ENCODE measurements at regions of chr2 and their contacts with region 1.

Region 1: DNA sequence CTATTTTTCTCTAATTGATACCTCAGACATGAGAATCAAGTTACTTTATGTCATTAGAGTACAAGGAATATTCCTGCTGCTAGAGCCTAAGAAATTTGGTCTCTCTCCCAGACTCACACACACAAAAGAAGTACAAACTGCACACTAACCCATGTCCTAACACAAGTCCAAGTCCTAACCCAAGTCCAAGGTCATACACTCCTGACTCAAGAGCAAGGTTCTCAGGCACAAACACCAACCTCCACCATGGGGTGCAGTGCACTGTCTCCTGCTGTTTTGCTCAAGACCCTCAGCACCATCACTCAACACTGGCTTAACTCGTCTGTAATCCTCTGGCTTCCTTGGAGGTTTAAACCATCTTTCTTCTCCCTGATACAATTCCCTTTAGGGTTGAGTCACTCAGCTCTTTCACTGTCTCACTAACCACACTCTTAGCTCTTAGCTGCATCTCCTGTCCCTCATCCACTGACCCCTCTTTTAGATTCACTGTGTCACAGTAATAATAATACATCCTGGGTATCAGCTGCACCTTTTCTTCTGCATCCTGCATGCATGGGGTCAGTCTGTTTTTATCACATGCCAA is 129.8 kb downstream of the BCL2L11 start:
- DNase-seq: no peak
- ATAC-seq: no peak
- H3K4me3 ChIP-seq: no peak overlapping the region
- H3K4me3 Mint-ChIP-seq: no peak overlapping the region
- H3K27ac ChIP-seq: no peak overlapping the region
- H3K27ac Mint-ChIP-seq: no peak overlapping the region
- H3K4me1 ChIP-seq: no peaks in the 10 kb centered on the region
- H3K4me1 Mint-ChIP-seq: peaks cover 0 to 9% (median 0%) of the 10 kb centered on the region in 7 donors
- H3K27me3 ChIP-seq: no peaks in the 10 kb centered on the region
- H3K27me3 Mint-ChIP-seq: peaks cover 0 to 4% (median 0%) of the 10 kb centered on the region in 5 donors

Region 2: DNA sequence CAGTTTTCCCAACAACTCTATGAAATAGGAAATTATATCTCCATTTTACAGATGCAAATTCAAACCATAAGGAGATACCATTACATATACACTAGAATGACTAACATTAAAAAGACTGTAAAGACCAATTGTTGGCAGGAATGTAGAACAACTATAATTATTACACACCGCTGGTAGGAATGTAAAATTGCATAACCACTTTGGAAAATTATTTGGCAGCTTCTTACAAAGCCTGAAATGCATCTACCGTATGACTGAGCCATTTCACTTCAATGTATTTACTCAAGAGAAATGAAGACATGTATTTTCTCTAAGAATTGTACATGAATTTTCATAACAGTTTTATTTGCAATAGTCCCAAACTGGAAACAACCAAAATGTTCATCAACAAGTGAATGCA is 318.9 kb before region 1 on chr2:
- CTCF ChIA-PET with region 1: no interaction called
- POLR2A ChIA-PET with region 1: no interaction called
- intact Hi-C with region 1: no loop called
- DNase-seq: no peak
- ATAC-seq: no peak
- H3K4me3 ChIP-seq: no peak overlapping the region
- H3K4me3 Mint-ChIP-seq: no peak overlapping the region
- H3K27ac ChIP-seq: no peak overlapping the region
- H3K27ac Mint-ChIP-seq: no peak overlapping the region
- H3K4me1 ChIP-seq: no peaks in the 10 kb centered on the region
- H3K4me1 Mint-ChIP-seq: no peaks in the 10 kb centered on the region
- H3K27me3 ChIP-seq: no peaks in the 10 kb centered on the region
- H3K27me3 Mint-ChIP-seq: peaks cover 0 to 4% (median 3%) of the 10 kb centered on the region in 5 donors

Region 3: GRCh38 chr2:111049792-111050640 is 200.5 kb before region 1 on chr2:
- CTCF ChIA-PET with region 1: no interaction called
- POLR2A ChIA-PET with region 1: no interaction called
- intact Hi-C with region 1: no loop called
- DNase-seq: no peak
- ATAC-seq: no peak
- H3K4me3 ChIP-seq: no peak overlapping the region
- H3K4me3 Mint-ChIP-seq: peak overlapping the region in 2 of 10 donors; percentile 0 to 29
- H3K27ac ChIP-seq: no peak overlapping the region
- H3K27ac Mint-ChIP-seq: no peak overlapping the region
- H3K4me1 ChIP-seq: no peaks in the 10 kb centered on the region
- H3K4me1 Mint-ChIP-seq: peaks cover 0 to 35% (median 22%) of the 10 kb centered on the region in 7 donors
- H3K27me3 ChIP-seq: no peaks in the 10 kb centered on the region
- H3K27me3 Mint-ChIP-seq: peaks cover 0 to 30% (median 0%) of the 10 kb centered on the region in 5 donors

Region 4: DNA sequence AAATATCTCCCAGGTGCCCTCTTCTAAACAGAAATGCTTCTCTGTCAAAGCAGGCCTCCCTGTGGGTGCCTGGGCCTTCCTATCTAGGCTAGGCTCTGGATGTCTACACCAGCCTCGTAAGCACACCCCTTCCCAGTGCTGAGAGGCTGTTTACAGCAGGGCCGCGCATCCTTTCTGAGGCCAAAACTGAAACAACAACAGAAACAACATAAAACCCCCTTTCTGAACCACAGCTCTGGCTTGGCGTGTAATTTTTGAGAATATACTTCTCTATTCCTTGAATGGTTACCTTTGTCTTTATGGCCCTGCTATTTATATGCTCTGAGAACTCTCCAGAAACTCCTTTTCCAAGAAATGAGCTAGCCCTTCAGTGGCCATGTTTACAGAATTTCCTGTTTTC is 11.4 kb before region 1 on chr2:
- CTCF ChIA-PET with region 1: no interaction called
- POLR2A ChIA-PET with region 1: no interaction called
- intact Hi-C with region 1: loop called in 1 of 2 experiments (anchors 1 kb)
- DNase-seq: peak in 1 of 9 donors; percentile 38
- ATAC-seq: no peak
- H3K4me3 ChIP-seq: no peak overlapping the region
- H3K4me3 Mint-ChIP-seq: peak overlapping the region in 1 of 10 donors; percentile 41
- H3K27ac ChIP-seq: no peak overlapping the region
- H3K27ac Mint-ChIP-seq: peak overlapping the region in 1 of 9 donors; percentile 91
- H3K4me1 ChIP-seq: no peaks in the 10 kb centered on the region
- H3K4me1 Mint-ChIP-seq: peaks cover 0 to 37% (median 0%) of the 10 kb centered on the region in 7 donors
- H3K27me3 ChIP-seq: no peaks in the 10 kb centered on the region
- H3K27me3 Mint-ChIP-seq: peaks cover 0 to 9% (median 3%) of the 10 kb centered on the region in 5 donors

Measured in naive thymus-derived CD4-positive, alpha-beta T cell (primary cell).